ENCODE measurements at regions of chr11 and their contacts with region 1.

Region 1: GRCh38 chr11:118311518-118311917 is 7.0 kb downstream of the CD3E start:
- DNase-seq: peak in 1 of 35 experiments; percentile 49
- ATAC-seq: peak in 1 of 4 experiments; percentile 26
- H3K4me3 ChIP-seq: no peak overlapping the region
- H3K4me3 Mint-ChIP-seq: peak overlapping the region in 2 of 3 donors; percentile 28 to 31
- H3K27ac ChIP-seq: peak overlapping the region; percentile 61
- H3K27ac Mint-ChIP-seq: peak overlapping the region; percentile 85 to 92
- H3K4me1 ChIP-seq: peaks cover 67 to 79% of the 10 kb centered on the region in 2 experiments
- H3K4me1 Mint-ChIP-seq: peaks cover 90 to 94% (median 91%) of the 10 kb centered on the region in 3 donors
- H3K27me3 ChIP-seq: no peaks in the 10 kb centered on the region
- H3K27me3 Mint-ChIP-seq: no peaks in the 10 kb centered on the region

Region 2: GRCh38 chr11:118060869-118061268 is 250.6 kb before region 1 on chr11:
- CTCF ChIA-PET with region 1: no interaction called
- POLR2A ChIA-PET with region 1: no interaction called
- DNase-seq: no peak
- ATAC-seq: no peak
- H3K4me3 ChIP-seq: no peak overlapping the region
- H3K4me3 Mint-ChIP-seq: no peak overlapping the region
- H3K27ac ChIP-seq: no peak overlapping the region
- H3K27ac Mint-ChIP-seq: no peak overlapping the region
- H3K4me1 ChIP-seq: peaks cover 0 to 8% of the 10 kb centered on the region in 2 experiments
- H3K4me1 Mint-ChIP-seq: no peaks in the 10 kb centered on the region
- H3K27me3 ChIP-seq: peaks cover 0 to 30% of the 10 kb centered on the region in 2 experiments
- H3K27me3 Mint-ChIP-seq: peaks cover 0 to 3% of the 10 kb centered on the region in 2 donors

Region 3: DNA sequence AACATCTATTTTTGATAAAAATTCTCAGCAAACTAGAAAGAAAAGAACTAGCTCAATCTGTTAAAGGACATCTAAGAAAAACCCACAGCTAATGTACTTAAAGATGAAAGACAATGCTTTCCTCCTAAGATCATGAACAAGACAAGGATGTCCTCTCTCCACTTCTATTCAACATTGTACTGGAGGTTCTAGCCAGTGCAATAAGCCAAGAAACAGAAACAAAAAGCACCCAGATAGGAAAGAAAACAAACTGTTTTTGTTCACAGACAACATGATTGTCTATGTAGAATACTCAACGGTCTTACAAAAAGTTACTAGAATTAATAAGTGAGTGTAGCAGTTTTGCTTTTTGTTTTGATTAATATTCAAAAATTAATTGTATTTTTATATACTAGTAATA is 23.2 kb after region 1 on chr11:
- CTCF ChIA-PET with region 1: interaction called in 1 of 2 experiments, 8 read pairs
- POLR2A ChIA-PET with region 1: interaction called, 4 to 12 read pairs
- DNase-seq: peak in 1 of 35 experiments; percentile 53
- ATAC-seq: peak; percentile 11 to 37 (median 28)
- H3K4me3 ChIP-seq: no peak overlapping the region
- H3K4me3 Mint-ChIP-seq: peak overlapping the region; percentile 15 to 46 (median 25)
- H3K27ac ChIP-seq: peak overlapping the region; percentile 97
- H3K27ac Mint-ChIP-seq: peak overlapping the region; percentile 90 to 91
- H3K4me1 ChIP-seq: peaks cover 32 to 58% of the 10 kb centered on the region in 2 experiments
- H3K4me1 Mint-ChIP-seq: peaks cover 52 to 58% (median 52%) of the 10 kb centered on the region in 3 donors
- H3K27me3 ChIP-seq: no peaks in the 10 kb centered on the region
- H3K27me3 Mint-ChIP-seq: no peaks in the 10 kb centered on the region

Region 4: GRCh38 chr11:118448294-118448693 is 136.8 kb after region 1 on chr11:
- CTCF ChIA-PET with region 1: no interaction called
- POLR2A ChIA-PET with region 1: no interaction called
- DNase-seq: no peak
- ATAC-seq: no peak
- H3K4me3 ChIP-seq: no peak overlapping the region
- H3K4me3 Mint-ChIP-seq: no peak overlapping the region
- H3K27ac ChIP-seq: no peak overlapping the region
- H3K27ac Mint-ChIP-seq: peak overlapping the region in 1 of 2 donors; percentile 22
- H3K4me1 ChIP-seq: peaks cover 10 to 11% of the 10 kb centered on the region in 2 experiments
- H3K4me1 Mint-ChIP-seq: peaks cover 74 to 80% (median 77%) of the 10 kb centered on the region in 3 donors
- H3K27me3 ChIP-seq: no peaks in the 10 kb centered on the region
- H3K27me3 Mint-ChIP-seq: no peaks in the 10 kb centered on the region

Region 5: GRCh38 chr11:119306373-119306890 is 994.9 kb after region 1 on chr11:
- CTCF ChIA-PET with region 1: no interaction called
- POLR2A ChIA-PET with region 1: no interaction called
- DNase-seq: peak in 32 of 35 experiments; percentile 27 to 86 (median 61)
- ATAC-seq: peak; percentile 89 to 97 (median 92)
- H3K4me3 ChIP-seq: peak overlapping the region in 1 of 2 donors; percentile 33
- H3K4me3 Mint-ChIP-seq: peak overlapping the region; percentile 10 to 79 (median 44)
- H3K27ac ChIP-seq: peak overlapping the region; percentile 71
- H3K27ac Mint-ChIP-seq: peak overlapping the region; percentile 92 to 95
- H3K4me1 ChIP-seq: peaks cover 27 to 30% of the 10 kb centered on the region in 2 experiments
- H3K4me1 Mint-ChIP-seq: peaks cover 30 to 33% (median 32%) of the 10 kb centered on the region in 3 donors
- H3K27me3 ChIP-seq: no peaks in the 10 kb centered on the region
- H3K27me3 Mint-ChIP-seq: no peaks in the 10 kb centered on the region